ENCODE measurements at regions of chr15 and their contacts with region 1.

Region 1: DNA sequence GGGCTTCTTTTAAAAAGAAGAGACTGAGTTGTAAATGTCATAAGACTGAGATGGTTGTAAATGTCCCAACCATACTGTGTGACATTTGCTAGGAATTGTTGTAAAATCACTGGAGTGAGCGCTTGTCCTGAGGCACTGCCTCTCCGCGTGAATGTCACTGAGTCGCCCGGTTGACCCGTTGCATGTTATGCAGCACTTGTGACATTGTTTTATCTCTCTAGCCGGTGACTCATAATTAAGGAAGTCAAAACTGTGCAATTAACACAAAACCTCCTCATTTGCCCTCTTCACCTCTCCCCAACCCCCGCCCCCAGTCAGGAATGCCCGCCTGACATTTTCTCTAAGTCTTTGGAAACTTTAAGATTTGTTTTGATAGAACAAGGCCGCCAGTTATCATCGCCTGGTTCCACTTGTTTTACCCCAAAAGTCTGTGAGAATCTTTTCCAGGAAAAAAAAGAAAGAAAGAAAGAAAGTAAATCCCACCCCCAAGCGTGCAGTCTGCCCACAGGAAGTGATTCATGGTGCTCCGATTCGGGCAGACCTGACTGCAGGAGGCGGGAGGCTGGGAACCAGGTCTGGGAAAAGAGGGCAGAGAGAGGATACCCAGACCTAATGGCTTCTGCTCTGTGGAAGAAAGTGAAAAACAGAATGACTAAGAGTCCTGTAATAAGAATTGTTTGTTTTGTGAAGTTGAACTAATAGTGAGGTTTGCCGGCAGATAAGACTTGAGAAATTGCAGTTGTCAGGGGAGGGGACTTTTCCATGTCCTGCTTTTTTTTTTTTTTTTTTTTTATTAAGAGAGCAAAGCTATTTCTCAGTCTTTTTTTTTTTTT is 84.8 kb downstream of the SMAD3 start:
- DNase-seq: peak; percentile 21
- H3K4me3 Mint-ChIP-seq: peak overlapping the region; percentile 48
- H3K27ac Mint-ChIP-seq: peak overlapping the region; percentile 91
- H3K4me1 Mint-ChIP-seq: peaks cover 80% of the 10 kb centered on the region
- H3K27me3 Mint-ChIP-seq: no peaks in the 10 kb centered on the region

Region 2: GRCh38 chr15:67175643-67176071 is 25.4 kb after region 1 on chr15:
- intact Hi-C with region 1: loop called (anchors 2 kb)
- DNase-seq: no peak
- H3K4me3 Mint-ChIP-seq: peak overlapping the region; percentile 31
- H3K27ac Mint-ChIP-seq: peak overlapping the region; percentile 83
- H3K4me1 Mint-ChIP-seq: peaks cover 82% of the 10 kb centered on the region
- H3K27me3 Mint-ChIP-seq: no peaks in the 10 kb centered on the region

Region 3: DNA sequence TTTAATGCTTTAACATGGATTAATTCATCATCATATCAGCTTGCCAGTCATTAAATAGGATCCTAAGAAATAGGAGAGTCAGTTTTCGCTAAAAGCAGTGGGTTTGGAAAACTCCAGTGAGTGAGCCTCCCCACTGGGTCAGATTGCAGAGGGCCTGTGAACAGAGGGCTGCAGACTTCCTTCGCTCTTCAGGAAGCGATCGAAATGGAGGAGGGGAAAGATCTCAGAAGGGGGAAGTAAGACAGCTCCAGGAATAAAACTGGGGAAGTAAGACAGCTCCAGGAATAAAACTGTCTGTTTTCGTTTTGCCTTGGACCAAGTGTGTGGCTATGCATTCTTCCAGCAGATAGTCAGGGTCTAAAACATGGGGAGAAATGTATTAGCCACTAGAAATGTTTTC is 245.9 kb after region 1 on chr15:
- intact Hi-C with region 1: no loop called
- DNase-seq: no peak
- H3K4me3 Mint-ChIP-seq: no peak overlapping the region
- H3K27ac Mint-ChIP-seq: no peak overlapping the region
- H3K4me1 Mint-ChIP-seq: no peaks in the 10 kb centered on the region
- H3K27me3 Mint-ChIP-seq: peaks cover 14% of the 10 kb centered on the region

Measured in activated T-helper 1 cell treated with anti-CD3 and anti-CD28 coated beads, Interleukin-12 subunit alpha, Interleukin-12 subunit beta, Interleukin-2, Interleukin-4 antibody, amounts not matched to agents 30 ng/mL and 10 ng/mL and 1 ng/mL, durations not matched to agents 14 hours and 24 hours and 36 hours (primary cell).